Kidney (tissue), 22 donors: ENCODE measurements at regions of chr2 and their contacts with region 1.

Region 1: DNA sequence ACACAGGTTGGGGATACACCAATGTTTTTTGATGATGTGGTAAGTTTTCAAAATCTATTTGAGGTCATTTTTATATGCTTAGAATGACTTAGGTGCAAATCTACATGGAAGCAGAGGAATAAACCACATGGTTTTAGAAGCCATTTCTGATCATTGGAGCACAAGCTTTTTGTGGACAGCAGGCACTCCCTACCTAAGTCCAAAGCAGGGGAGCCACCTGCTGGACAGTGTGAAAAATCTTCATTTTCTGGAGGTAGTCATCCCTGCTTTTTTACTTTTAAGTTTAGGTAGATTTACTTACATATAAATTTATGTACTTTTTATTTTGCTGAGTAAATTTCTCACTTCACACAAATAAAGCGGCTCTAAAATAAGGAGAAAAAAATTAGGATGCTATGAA is 323.2 kb downstream of the PLCL1 start:
- DNase-seq: peak in 3 of 5 donors; percentile 15 to 79 (median 42)
- H3K4me3 ChIP-seq: no peak overlapping the region
- H3K27ac ChIP-seq: no peak overlapping the region
- H3K4me1 ChIP-seq: peaks cover 0 to 3% (median 0%) of the 10 kb centered on the region in 3 donors
- H3K27me3 ChIP-seq: no peaks in the 10 kb centered on the region
- CTCF ChIP-seq: peak; percentile 77

Region 2: DNA sequence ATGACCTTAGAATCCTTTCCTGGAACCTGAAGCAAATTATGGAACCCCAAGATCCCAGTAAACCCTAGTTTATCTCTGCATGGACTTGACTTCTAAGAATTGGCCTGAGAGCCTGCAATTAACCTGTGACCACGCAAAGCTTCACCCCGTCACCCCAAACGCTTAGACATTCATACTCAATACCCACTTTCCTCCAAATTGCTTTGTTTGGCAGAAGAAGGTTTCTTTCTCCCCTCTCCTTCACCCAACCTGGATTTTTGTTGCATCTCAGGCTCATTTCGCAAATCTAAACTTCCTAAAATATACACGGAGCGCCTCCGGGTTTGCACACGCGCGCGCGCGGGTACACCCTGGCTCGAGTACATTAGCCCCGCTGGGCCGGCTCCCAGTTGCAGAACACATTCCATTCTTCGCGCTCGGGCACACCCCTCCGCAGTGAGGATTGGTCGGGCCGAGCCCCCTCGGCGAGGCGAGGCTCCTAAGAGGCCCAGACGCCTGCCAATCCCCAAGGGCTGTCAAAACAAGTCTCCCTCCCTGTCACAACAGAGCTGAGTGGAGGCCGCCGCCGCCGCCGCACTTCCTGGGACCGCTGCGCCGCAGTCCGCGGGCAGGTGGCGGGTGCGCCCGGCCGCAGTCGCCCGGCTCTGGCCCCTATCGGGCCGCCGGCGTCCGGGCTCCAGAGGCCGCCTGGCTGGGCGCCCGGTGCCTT is 323.4 kb before region 1 on chr2 and contains the start of gene PLCL1:
- intact Hi-C with region 1: loop called (anchors 5 kb)
- DNase-seq: peak; percentile 95 to 97 (median 95)
- H3K4me3 ChIP-seq: peak within 1 kb of the TSS; percentile 72 to 97 (median 76)
- H3K27ac ChIP-seq: peak within 1 kb of the TSS; percentile 61 to 73
- H3K4me1 ChIP-seq: peaks cover 2 to 6% (median 3%) of the 10 kb centered on the region in 3 donors
- H3K27me3 ChIP-seq: no peaks in the 10 kb centered on the region
- CTCF ChIP-seq: peak; percentile 16
- total RNA-seq, gene PLCL1: 14.7 TPM

Region 3: DNA sequence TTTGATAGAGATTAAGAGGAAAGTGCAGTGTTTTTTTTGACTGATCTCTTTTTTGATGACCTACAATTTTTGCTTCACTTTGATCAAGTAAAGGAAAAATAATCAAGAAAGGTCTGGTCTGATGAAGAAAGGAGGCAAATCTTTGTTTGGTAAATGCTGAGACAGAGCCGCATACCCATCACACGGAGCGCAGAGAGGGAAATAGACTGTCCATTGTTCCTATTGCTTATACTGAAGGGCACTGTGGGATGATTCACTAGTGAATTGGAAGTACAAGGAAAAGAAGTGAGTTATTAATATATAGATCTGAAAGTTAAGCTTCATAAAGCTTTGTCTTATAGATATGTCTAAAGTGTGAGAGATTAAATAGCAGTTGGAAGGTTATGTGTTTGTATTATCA is 131.9 kb after region 1 on chr2:
- intact Hi-C with region 1: no loop called
- DNase-seq: no peak
- H3K4me3 ChIP-seq: no peak overlapping the region
- H3K27ac ChIP-seq: no peak overlapping the region
- H3K4me1 ChIP-seq: no peaks in the 10 kb centered on the region
- H3K27me3 ChIP-seq: no peaks in the 10 kb centered on the region
- CTCF ChIP-seq: no peak